ENCODE measurements at regions of chr4 and their contacts with region 1.

Region 1: DNA sequence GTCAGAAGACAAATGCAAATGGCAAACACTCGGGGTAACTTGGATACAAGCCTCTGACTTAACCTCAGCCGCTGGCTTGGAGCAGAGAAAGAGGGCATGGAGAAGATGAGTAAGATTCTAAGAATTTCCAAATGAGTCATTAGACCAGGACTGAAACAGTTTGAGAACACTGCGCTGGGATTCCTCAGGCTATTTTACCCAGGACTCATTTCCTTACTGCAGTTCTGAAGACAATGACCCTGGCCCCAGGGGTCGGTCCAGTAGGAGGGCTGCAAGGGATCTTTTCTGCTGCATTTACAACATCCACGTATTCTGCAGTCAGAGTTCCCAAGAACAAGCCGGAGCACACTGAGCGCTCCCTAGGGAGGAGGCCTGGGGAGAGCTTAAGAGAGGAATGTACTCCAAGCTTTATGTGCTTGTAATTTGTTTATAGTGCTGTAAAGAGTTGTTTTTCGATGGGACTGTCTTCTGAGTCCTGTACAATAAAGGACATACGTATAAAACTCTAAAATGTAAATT is 27.3 kb upstream of the SORBS2 start:
- DNase-seq: peak; percentile 57
- H3K4me3 ChIP-seq: no peak overlapping the region
- H3K27ac ChIP-seq: peak overlapping the region; percentile 75 to 86 (median 80)
- H3K4me1 ChIP-seq: peaks cover 19 to 31% (median 21%) of the 10 kb centered on the region in 4 donors
- H3K27me3 ChIP-seq: no peaks in the 10 kb centered on the region
- CTCF ChIP-seq: no peak
- EP300 ChIP-seq: peak; percentile 32
- POLR2A ChIP-seq: no peak

Region 2: DNA sequence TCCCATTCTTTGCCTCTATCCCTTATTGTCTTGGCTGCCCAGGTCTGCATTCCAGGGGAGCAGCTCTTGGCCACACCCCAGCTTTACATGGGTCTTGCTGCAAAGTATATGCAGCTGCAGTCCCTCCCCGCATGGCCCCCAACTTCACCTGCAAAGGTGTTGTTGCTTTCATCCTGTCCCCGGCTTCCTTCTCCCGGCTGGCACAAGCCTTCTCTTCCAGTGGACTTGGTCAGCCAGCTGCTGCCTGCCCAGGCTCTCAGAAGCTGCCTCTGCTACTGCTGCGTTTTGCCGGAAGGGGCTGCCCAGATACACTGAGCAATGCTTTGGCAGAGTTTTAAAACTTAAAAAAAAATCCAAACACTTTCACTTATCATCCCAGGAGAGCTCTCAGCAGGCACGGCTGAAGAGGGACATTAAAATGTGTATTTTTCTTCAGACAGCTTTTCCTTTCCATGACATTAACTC is 182.8 kb before region 1 on chr4:
- in situ Hi-C with region 1: no loop called
- intact Hi-C with region 1: no loop called
- DNase-seq: peak; percentile 25
- H3K4me3 ChIP-seq: peak overlapping the region; percentile 9 to 43 (median 24)
- H3K27ac ChIP-seq: peak overlapping the region; percentile 63 to 82 (median 76)
- H3K4me1 ChIP-seq: peaks cover 0 to 11% (median 9%) of the 10 kb centered on the region in 4 donors
- H3K27me3 ChIP-seq: no peaks in the 10 kb centered on the region
- CTCF ChIP-seq: peak in 3 of 5 experiments; percentile 22 to 46 (median 27)
- EP300 ChIP-seq: no peak
- POLR2A ChIP-seq: peak; percentile 20

Region 3: DNA sequence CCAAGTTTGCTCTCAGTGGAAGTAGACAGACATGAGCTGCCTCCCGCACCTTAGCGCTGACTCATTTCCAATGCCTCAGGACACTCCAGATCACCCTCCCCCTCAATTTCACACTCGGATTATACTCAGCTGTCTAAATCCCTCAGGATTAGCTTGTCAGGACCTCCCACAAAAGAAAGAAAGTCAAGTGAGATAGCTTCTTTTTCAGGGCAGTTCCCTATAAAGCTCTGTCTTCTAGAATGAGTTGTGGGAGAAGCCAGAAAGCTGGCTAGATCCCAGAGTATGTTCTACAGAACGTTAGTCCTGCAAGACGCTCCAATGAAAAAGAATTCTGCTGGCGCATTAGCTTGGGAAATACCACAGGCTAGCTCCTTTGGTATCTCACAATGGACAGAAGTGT is 767.3 kb after region 1 on chr4:
- in situ Hi-C with region 1: no loop called
- intact Hi-C with region 1: loop called (anchors 5 kb)
- DNase-seq: no peak
- H3K4me3 ChIP-seq: no peak overlapping the region
- H3K27ac ChIP-seq: no peak overlapping the region
- H3K4me1 ChIP-seq: no peaks in the 10 kb centered on the region
- H3K27me3 ChIP-seq: no peaks in the 10 kb centered on the region
- CTCF ChIP-seq: no peak
- EP300 ChIP-seq: no peak
- POLR2A ChIP-seq: no peak

Measured in transverse colon (tissue), 4 donors.